A673 (cell line): ENCODE measurements at regions of chr9 and their contacts with region 1.

Region 1: DNA sequence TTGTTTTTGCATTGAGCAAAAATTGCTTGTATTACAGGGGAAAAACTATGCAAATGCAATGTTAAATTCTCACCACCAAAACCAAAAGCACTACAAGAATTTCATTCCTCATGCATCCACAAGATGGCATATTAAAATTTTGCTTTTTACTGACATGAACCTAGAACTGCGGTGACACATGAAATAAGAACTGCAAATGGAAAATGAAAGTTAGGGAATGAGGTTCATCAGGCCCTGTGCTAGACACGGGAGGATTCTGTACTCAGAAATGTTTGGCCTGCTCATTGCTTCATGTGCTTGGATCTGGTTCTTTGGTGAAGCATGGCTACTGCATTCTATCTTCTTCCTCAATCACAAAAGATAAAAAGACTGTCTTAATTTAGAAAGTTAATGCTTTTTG is 9.1 kb upstream of the RFK start:
- DNase-seq: peak; percentile 70
- H3K4me3 ChIP-seq: peak overlapping the region; percentile 3
- H3K27ac ChIP-seq: no peak overlapping the region
- H3K4me1 ChIP-seq: no peaks in the 10 kb centered on the region
- H3K27me3 ChIP-seq: no peaks in the 10 kb centered on the region
- CTCF ChIP-seq: peak; percentile 57

Region 2: GRCh38 chr9:76451234-76451633 is 47.9 kb after region 1 on chr9:
- CTCF ChIA-PET with region 1: no interaction called
- POLR2A ChIA-PET with region 1: no interaction called
- intact Hi-C with region 1: loop called (anchors 5 kb)
- DNase-seq: no peak
- H3K4me3 ChIP-seq: no peak overlapping the region
- H3K27ac ChIP-seq: no peak overlapping the region
- H3K4me1 ChIP-seq: no peaks in the 10 kb centered on the region
- H3K27me3 ChIP-seq: no peaks in the 10 kb centered on the region
- CTCF ChIP-seq: no peak

Region 3: GRCh38 chr9:76658535-76659231 is 255.3 kb after region 1 on chr9:
- CTCF ChIA-PET with region 1: no interaction called
- POLR2A ChIA-PET with region 1: no interaction called
- intact Hi-C with region 1: loop called (anchors 5 kb)
- DNase-seq: peak; percentile 25
- H3K4me3 ChIP-seq: no peak overlapping the region
- H3K27ac ChIP-seq: no peak overlapping the region
- H3K4me1 ChIP-seq: peaks cover 9% of the 10 kb centered on the region
- H3K27me3 ChIP-seq: peaks cover 4% of the 10 kb centered on the region
- CTCF ChIP-seq: peak; percentile 57